Naive thymus-derived CD4-positive, alpha-beta T cell (primary cell): ENCODE measurements at regions of chr12 and their contacts with region 1.

Region 1: DNA sequence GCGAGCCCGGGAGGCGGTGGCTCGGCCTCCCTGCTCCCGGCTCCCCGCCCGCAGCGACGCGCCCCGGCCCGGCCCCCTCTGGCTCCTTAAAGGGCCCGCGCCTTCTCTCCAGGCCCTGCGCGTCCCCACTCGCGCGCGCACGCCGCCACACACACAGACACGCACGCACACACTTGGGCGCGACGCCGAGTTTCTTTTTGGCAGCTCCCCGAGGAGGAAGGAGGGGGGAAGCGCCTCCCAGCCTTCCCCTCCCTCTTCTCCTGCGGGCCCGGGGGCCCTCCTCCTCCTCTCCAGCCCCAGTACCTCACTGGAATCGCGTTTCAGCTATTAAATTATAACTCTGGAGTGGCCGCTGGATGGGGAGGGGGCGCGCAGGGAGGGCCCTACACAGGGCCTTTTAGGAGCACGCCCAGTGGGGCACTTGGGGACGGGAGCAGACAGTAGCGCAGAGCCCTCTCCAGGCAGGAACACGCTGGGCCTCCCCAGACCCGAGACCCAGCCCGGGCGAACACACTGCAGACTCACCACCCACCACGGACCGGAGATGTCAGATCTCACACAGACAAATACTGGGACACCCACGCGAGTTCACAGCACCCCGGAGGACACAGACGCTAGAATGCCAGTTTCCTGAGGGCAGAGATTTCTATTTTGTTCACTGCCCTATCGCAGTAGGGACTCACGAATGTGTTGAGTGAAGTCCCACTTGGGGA is 405 bp upstream of the NCOR2 start:
- DNase-seq: peak; percentile 70 to 85 (median 82)
- ATAC-seq: peak; percentile 87
- H3K4me3 ChIP-seq: peak overlapping the region; percentile 72
- H3K4me3 Mint-ChIP-seq: peak overlapping the region; percentile 78 to 92 (median 86)
- H3K27ac ChIP-seq: peak overlapping the region; percentile 58
- H3K27ac Mint-ChIP-seq: peak overlapping the region; percentile 59 to 88 (median 81)
- H3K4me1 ChIP-seq: peaks cover 6 to 15% of the 10 kb centered on the region in 2 donors
- H3K4me1 Mint-ChIP-seq: peaks cover 0 to 47% (median 25%) of the 10 kb centered on the region in 7 donors
- H3K27me3 ChIP-seq: no peaks in the 10 kb centered on the region
- H3K27me3 Mint-ChIP-seq: no peaks in the 10 kb centered on the region

Region 2: DNA sequence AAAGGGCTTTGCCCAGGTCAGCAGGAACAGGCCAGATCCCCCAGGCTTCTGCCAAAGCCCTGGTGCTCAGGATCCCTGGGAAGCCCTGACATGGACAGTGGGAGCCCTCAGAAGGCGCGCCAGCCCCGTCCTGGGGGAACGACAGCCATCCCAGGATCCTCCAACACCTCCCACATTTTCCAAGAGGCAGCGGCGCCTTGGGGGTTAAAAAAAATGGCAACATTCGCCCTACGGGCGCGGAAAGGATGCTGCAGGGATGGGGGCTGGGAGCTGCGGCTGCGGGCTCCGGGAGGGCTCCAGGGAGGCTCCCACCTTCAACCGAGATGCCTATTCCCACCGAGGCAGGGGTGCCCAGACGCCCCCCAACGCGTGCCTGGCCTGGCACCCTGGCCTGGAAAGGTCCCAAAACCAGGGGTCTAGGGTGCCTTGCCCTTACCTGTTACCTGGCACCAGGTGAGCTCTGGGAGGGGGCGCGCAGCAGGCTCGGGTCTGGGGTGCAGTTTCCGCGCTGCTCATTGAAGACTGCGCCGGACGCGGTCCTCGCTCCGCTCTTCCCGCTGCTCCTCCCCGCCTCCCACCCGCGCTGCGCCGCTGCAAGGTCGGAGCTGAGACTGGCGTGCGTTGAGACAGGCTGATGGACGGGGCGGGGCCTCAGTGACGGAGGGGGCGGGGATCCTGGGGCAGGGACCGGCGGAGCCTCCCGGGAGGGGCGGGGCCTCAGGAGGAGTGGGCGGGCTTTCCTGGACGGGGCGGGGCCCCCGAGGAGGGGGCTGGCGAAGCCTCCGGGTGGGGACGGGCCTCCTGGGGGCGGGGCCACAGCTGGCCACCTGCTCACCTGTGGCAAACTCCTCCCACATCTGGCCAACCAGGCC is 1601.7 kb before region 1 on chr12 and contains the start of gene ABCB9:
- CTCF ChIA-PET with region 1: no interaction called
- POLR2A ChIA-PET with region 1: no interaction called
- intact Hi-C with region 1: loop called in 1 of 2 experiments (anchors 5 kb)
- DNase-seq: peak; percentile 78 to 95 (median 85)
- ATAC-seq: peak; percentile 99
- H3K4me3 ChIP-seq: peak within 1 kb of the TSS; percentile 80
- H3K4me3 Mint-ChIP-seq: peak within 1 kb of the TSS; percentile 47 to 84 (median 76)
- H3K27ac ChIP-seq: peak within 1 kb of the TSS; percentile 67
- H3K27ac Mint-ChIP-seq: peak within 1 kb of the TSS in 8 of 9 donors; percentile 22 to 90 (median 70)
- H3K4me1 ChIP-seq: peaks cover 10 to 15% of the 10 kb centered on the region in 2 donors
- H3K4me1 Mint-ChIP-seq: peaks cover 5 to 20% (median 12%) of the 10 kb centered on the region in 7 donors
- H3K27me3 ChIP-seq: no peaks in the 10 kb centered on the region
- H3K27me3 Mint-ChIP-seq: no peaks in the 10 kb centered on the region
- total RNA-seq, gene ABCB9: 6.2 to 8.9 (median 7.1) TPM

Region 3: DNA sequence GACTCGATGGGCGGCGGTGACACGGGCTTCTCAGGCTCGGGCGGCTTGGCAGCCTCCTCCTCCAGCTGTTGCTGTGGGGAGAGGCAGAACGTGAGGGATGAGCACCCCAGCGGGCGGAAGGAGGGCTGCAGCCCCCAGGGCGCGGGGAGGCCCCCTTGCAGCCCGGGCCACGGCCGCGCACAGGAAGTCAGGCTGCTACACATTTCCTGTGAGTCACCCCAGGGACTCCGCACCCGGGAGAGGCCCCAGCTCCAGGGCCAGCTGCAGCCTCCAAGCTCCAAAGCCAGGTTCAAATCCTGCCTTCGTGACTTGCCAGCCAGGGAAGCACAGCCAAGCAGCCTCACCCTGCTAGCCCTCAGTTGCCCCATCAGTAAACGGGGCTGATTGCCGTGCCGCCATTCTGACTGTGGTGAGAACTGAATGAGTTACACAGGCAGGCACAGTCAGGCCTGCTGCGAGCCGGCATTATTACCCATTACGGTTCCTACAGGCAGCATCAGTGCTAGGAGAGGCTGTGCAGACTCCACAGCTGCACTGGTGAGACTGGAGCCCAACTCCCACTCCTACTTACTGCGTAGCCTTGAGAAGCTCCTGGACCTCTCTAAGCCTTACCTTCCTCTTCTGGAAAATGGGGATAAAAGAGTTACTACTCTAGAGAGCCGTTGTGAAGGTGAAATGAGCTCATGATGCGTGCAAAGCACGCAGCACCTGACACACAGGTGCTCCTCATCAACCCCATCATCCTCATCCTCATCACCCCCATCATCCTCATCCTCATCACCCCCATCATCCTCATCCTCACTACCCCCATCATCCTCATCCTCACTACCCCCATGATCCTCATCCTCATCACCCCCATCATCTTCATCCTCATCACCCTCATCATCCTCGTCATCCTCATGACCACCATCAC is 101.3 kb before region 1 on chr12:
- CTCF ChIA-PET with region 1: no interaction called
- POLR2A ChIA-PET with region 1: no interaction called
- intact Hi-C with region 1: loop called in 1 of 2 experiments (anchors 1 kb)
- DNase-seq: peak; percentile 76 to 91 (median 83)
- ATAC-seq: peak; percentile 98
- H3K4me3 ChIP-seq: peak overlapping the region; percentile 63
- H3K4me3 Mint-ChIP-seq: peak overlapping the region; percentile 48 to 85 (median 74)
- H3K27ac ChIP-seq: peak overlapping the region; percentile 58
- H3K27ac Mint-ChIP-seq: peak overlapping the region; percentile 73 to 93 (median 82)
- H3K4me1 ChIP-seq: peaks cover 18 to 27% of the 10 kb centered on the region in 2 donors
- H3K4me1 Mint-ChIP-seq: peaks cover 0 to 46% (median 37%) of the 10 kb centered on the region in 7 donors
- H3K27me3 ChIP-seq: no peaks in the 10 kb centered on the region
- H3K27me3 Mint-ChIP-seq: no peaks in the 10 kb centered on the region

Region 4: DNA sequence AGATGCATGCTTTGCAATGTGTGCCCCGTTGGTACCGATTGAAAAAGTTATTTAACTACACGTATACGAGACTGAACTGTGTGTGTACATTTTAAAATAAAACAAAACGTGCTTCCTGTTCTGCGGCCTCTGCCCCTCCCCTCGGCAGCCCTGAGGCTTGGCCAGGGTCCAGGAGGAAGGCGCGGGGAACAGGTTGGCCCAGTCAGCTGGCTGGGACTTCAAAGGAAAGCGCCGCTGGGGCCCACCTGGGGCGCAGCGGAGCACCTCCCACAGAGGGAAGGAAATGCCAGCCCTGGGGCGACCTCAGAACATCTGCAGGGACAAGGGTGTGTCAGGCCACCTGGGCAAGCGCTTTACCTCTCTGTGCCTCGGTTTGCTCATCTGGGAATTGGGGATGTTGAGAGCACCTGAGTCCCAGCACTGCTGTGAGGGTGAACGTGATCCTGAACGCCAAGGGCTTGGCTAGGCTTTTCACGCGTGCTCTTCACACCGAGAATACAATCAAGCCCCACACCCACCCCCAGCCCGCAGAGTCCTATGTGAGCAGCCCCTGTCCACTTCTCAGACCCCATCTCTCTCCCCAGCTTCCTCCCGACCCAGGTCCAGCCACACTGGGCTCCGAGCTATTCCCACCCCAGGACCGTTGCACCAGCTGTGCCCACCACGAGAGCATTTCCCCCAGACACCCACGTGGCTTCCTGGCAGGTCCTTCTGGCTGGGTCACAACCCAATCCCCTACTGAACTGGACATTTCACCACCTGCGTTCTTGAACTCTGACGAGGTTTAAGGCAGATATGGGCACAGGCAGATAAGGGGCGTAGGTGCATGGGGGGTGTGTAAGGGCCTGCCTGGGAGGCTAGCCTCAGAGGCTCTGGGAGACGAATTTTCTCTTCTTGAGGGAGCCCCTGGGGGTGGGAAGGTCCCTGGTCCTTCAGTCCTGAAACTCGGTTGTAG is 41.5 kb after region 1 on chr12:
- CTCF ChIA-PET with region 1: no interaction called
- POLR2A ChIA-PET with region 1: interaction called, 4 read pairs
- intact Hi-C with region 1: loop called in 1 of 2 experiments (anchors 1 kb)
- DNase-seq: peak; percentile 38 to 94 (median 92)
- ATAC-seq: peak; percentile 95
- H3K4me3 ChIP-seq: peak overlapping the region; percentile 29
- H3K4me3 Mint-ChIP-seq: peak overlapping the region; percentile 50 to 90 (median 83)
- H3K27ac ChIP-seq: no peak overlapping the region
- H3K27ac Mint-ChIP-seq: peak overlapping the region in 8 of 9 donors; percentile 57 to 85 (median 70)
- H3K4me1 ChIP-seq: peaks cover 23 to 31% of the 10 kb centered on the region in 2 donors
- H3K4me1 Mint-ChIP-seq: peaks cover 18 to 59% (median 52%) of the 10 kb centered on the region in 7 donors
- H3K27me3 ChIP-seq: no peaks in the 10 kb centered on the region
- H3K27me3 Mint-ChIP-seq: peaks cover 0 to 20% (median 0%) of the 10 kb centered on the region in 5 donors

Region 5: DNA sequence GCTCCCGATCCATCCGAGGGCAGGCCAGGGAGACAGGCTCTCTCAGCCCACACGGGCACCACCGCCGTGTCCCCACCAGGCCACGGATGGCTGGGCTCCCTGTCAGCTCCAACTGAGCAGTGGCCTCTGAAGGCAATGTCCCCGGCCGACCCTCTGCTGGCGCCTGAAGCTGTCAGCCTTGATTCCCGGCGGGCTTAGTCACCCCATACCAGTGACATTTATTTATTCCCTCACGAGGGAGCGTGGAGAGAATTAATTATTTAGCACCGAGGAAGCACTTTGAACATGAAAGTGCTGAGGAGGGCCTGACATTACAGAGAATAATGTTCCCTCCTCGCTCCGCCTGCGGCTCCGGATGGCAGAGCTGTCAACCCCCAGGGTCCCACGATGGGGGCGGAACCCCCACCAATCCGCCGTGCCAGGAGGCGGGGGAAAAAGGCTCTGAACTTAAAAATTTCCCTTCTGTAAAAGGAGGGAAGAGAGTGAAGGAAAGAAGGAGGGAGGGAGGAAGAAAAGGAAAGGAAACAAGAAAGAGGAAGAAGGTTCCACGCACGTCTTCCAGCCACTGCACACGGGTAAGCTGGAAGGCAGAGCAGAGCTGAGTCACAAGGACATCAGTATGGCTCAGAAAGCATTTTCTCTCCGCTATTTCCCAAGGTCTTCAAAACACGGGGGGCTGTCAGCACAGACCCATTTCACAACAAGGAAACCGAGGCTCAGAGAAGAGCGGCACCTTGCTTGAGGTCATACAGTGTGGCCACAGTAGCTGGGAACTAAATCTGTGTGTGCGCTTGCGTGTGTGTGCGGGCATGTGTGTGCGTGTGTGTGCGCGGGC is 108.3 kb after region 1 on chr12:
- CTCF ChIA-PET with region 1: no interaction called
- POLR2A ChIA-PET with region 1: no interaction called
- intact Hi-C with region 1: no loop called
- DNase-seq: no peak
- ATAC-seq: peak; percentile 67
- H3K4me3 ChIP-seq: no peak overlapping the region
- H3K4me3 Mint-ChIP-seq: peak overlapping the region in 4 of 10 donors; percentile 12 to 42 (median 25)
- H3K27ac ChIP-seq: no peak overlapping the region
- H3K27ac Mint-ChIP-seq: peak overlapping the region in 1 of 9 donors; percentile 84
- H3K4me1 ChIP-seq: no peaks in the 10 kb centered on the region
- H3K4me1 Mint-ChIP-seq: peaks cover 0 to 2% (median 0%) of the 10 kb centered on the region in 7 donors
- H3K27me3 ChIP-seq: no peaks in the 10 kb centered on the region
- H3K27me3 Mint-ChIP-seq: no peaks in the 10 kb centered on the region

Region 6: DNA sequence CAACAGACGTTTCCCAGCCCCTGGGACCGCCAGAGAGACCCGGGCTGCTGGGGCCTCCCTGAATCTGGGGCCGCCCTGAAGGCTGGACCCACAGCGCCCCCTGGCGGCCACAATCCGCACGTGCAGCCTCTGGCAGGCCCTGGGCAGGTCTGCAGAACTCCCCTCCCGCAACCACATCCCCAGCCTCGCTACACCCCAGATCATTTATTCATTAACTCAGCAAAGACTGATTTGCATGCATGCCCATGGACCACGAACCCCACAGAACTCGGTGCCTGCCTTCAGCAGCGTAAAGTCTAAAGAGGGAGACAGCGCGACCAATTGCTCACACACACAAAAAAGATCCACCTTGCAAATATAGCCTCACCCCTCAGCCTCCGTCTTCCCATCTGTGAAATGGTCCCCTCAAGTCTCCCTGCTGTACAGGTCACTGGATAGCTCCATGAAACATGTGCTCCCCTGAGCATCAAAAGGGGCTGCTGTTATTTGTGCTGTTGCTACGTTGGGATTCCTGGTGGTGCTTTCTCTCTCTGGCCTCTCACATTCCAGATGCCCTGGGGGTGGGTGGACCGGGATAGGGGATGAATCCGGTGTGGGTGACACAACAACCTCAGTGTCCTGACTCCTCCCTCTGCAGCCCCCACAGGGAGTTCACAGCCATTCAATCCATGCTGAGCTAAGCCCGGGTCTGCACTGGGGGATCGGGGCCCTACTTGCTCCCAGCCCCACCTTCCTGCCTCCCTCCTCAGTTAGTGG is 199.4 kb after region 1 on chr12:
- CTCF ChIA-PET with region 1: no interaction called
- POLR2A ChIA-PET with region 1: no interaction called
- intact Hi-C with region 1: loop called (anchors 5 kb)
- DNase-seq: peak; percentile 66 to 89 (median 82)
- ATAC-seq: peak; percentile 93
- H3K4me3 ChIP-seq: no peak overlapping the region
- H3K4me3 Mint-ChIP-seq: peak overlapping the region in 1 of 10 donors; percentile 20
- H3K27ac ChIP-seq: no peak overlapping the region
- H3K27ac Mint-ChIP-seq: peak overlapping the region in 6 of 9 donors; percentile 9 to 81 (median 30)
- H3K4me1 ChIP-seq: peaks cover 5% of the 10 kb centered on the region in 2 donors
- H3K4me1 Mint-ChIP-seq: peaks cover 10 to 20% (median 13%) of the 10 kb centered on the region in 7 donors
- H3K27me3 ChIP-seq: no peaks in the 10 kb centered on the region
- H3K27me3 Mint-ChIP-seq: peaks cover 4 to 20% (median 6%) of the 10 kb centered on the region in 5 donors

Region 7: GRCh38 chr12:124917135-124917840 is 349.5 kb after region 1 on chr12:
- CTCF ChIA-PET with region 1: no interaction called
- POLR2A ChIA-PET with region 1: no interaction called
- intact Hi-C with region 1: loop called (anchors 2 to 5 kb)
- DNase-seq: peak; percentile 73 to 97 (median 93)
- ATAC-seq: peak; percentile 81
- H3K4me3 ChIP-seq: peak overlapping the region; percentile 60
- H3K4me3 Mint-ChIP-seq: peak overlapping the region; percentile 83 to 100 (median 88)
- H3K27ac ChIP-seq: peak overlapping the region; percentile 84
- H3K27ac Mint-ChIP-seq: peak overlapping the region; percentile 90 to 100 (median 98)
- H3K4me1 ChIP-seq: peaks cover 57 to 70% of the 10 kb centered on the region in 2 donors
- H3K4me1 Mint-ChIP-seq: peaks cover 64 to 98% (median 90%) of the 10 kb centered on the region in 7 donors
- H3K27me3 ChIP-seq: no peaks in the 10 kb centered on the region
- H3K27me3 Mint-ChIP-seq: peaks cover 0 to 16% (median 0%) of the 10 kb centered on the region in 5 donors